Endothelial cell of umbilical vein (primary cell): ENCODE measurements at regions of chr4 and their contacts with region 1.

Region 1: DNA sequence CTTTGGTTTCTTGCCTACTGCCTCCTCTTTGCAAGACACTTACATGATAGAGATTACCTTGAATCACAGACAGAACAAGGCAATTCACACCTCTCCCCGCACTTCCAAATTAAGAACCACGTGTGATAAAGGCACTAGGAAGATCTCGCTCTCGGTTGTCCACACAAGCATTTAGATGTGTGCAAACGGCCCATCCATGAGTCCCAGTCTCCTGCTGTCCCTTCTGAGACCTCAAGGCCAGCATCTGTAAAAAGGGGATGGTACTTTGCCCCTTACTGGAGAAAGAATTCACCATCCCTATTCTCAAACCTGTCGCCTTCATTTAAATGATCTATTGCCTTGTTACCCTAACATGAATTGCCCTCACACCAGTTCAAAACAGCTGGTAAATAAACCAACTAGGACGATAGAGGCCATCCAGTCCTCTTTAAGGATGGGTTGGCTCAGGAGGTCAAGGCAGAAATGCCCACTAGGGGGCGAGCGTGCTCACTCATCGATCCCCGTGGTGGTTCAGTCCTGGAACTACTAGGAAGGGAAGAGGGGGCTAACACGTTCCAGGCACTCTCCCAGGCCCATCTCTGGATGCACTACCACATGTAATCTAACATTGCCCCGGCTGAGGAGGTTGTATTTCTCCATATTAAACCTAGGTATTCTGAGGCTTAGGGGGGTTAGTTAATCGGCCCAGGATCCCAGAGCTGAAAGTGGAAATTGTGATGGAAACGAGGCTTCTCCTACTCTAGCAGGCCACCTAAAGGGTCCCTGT is 95.8 kb downstream of the DHX15 start:
- DNase-seq: peak; percentile 67
- H3K4me3 ChIP-seq: no peak overlapping the region
- H3K27ac ChIP-seq: no peak overlapping the region
- H3K4me1 ChIP-seq: no peaks in the 10 kb centered on the region
- H3K27me3 ChIP-seq: peaks cover 6 to 9% of the 10 kb centered on the region in 2 experiments
- CTCF ChIP-seq: peak; percentile 88 to 90
- POLR2A ChIP-seq: no peak

Region 2: DNA sequence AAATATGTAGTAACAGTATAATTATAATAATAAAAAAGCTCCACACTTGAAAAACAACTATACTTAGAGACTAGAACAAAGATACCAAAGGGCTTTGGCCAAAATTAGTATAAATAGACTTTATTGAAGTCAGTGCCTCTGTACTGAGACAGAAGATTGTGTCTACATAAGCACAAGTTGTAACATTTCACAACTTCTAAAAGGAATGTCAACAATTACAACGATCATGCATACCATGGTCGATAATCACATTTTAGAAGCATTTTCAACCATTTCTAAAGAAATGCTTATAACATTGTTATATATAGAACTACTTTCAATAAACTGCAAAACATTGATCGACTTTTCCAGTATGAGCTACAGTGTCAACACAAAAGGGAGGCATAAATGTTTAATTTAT is 38.8 kb after region 1 on chr4:
- CTCF ChIA-PET with region 1: no interaction called
- POLR2A ChIA-PET with region 1: no interaction called
- dilution Hi-C with region 1: no loop called
- intact Hi-C with region 1: no loop called
- DNase-seq: no peak
- H3K4me3 ChIP-seq: no peak overlapping the region
- H3K27ac ChIP-seq: no peak overlapping the region
- H3K4me1 ChIP-seq: no peaks in the 10 kb centered on the region
- H3K27me3 ChIP-seq: no peaks in the 10 kb centered on the region
- CTCF ChIP-seq: no peak
- POLR2A ChIP-seq: no peak

Region 3: GRCh38 chr4:24686871-24687680 is 198.5 kb after region 1 on chr4:
- CTCF ChIA-PET with region 1: interaction called, 9 read pairs
- POLR2A ChIA-PET with region 1: no interaction called
- dilution Hi-C with region 1: no loop called
- intact Hi-C with region 1: loop called (anchors 1 kb)
- DNase-seq: peak; percentile 11
- H3K4me3 ChIP-seq: no peak overlapping the region
- H3K27ac ChIP-seq: no peak overlapping the region
- H3K4me1 ChIP-seq: no peaks in the 10 kb centered on the region
- H3K27me3 ChIP-seq: peaks cover 2 to 3% of the 10 kb centered on the region in 2 experiments
- CTCF ChIP-seq: peak; percentile 50 to 59
- POLR2A ChIP-seq: no peak